Cardiac septum (tissue), 1 donor: ENCODE measurements at regions of chr18 and their contacts with region 1.

Region 1: DNA sequence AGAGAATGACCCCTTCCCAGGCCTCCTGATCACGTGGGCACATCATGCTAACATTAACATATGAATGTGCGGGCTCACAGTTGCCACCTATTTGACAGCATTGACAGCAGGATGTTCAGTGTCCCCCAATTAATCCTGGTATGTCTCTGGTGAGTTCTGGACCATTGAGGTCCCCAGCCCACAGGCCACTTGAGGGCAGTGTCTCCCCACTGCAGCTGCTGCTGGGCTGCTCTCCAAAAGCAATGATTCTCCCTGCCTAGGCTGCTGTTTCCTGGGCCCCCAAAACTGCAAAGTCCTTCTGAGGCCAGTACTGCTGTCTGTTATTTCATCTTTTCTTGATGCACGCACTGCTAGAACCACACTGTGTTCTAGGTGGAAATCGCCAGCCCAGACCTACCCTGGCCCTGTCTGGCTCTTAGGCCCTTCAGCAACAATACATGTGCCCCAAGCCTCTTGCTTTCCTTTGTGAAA is 52.7 kb upstream of the MAPK4 start:
- DNase-seq: no peak

Region 2: DNA sequence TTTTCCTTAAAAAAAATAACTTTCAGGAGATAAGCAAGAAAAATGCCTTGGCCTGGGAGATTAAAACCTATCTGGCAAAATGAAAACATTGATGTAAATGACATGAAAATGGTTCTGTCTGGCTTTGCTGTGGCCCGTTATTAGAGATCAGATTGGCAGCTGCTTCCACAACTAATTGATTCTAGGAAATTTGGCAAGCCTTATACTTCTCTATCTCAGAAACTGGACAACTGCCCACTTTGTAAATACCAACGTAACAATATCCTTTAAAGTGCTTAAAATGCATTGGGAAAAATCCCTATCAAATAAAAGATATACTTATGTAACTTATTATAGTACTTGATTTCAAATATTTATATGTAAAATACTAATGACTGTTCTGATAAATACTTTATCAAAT is 146.5 kb before region 1 on chr18:
- intact Hi-C with region 1: no loop called
- DNase-seq: no peak

Region 3: GRCh38 chr18:50573679-50574078 is 66.5 kb after region 1 on chr18:
- intact Hi-C with region 1: loop called (anchors 10 kb)
- DNase-seq: no peak

Region 4: DNA sequence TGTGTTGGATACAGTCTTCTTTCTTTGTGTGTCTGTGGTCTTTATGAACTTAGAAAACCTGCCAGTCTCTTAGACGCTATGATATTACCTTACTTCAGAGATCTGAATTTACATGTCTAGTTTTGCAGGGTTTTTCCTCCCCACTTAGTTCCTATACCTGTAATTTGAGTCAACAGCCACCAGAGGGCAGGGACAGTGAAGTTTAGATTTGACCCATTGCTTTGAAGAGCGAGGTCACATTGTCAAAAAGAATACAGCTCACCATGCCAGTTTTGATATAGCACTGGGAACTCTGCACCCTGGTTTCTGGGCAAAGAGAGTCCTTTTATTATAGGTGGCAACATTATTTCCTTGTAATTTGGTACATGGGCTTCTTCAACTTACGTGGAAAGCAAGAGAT is 155.0 kb after region 1 on chr18:
- intact Hi-C with region 1: loop called (anchors 5 kb)
- DNase-seq: no peak

Region 5: DNA sequence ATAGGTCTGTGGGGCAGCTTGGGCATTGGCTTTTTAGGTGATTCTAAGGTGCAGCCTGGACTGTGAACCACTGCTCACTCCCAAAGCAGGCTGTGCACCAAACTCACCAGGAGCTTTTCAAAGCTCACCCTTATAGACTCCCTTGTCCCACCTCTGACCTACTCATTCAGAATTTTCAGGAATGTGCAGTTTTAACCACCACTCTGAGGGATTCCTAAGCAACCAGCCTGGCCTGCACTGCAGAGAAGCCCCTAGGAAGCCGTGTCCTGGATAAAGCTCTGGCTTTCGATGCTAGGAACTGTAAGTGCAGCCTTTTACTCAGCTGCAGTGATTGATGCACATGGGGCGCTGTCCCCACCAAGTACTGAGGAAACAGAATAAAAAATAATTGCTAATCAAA is 279.7 kb after region 1 on chr18:
- intact Hi-C with region 1: loop called (anchors 1 kb)
- DNase-seq: no peak

Region 6: GRCh38 chr18:50866765-50867164 is 359.6 kb after region 1 on chr18:
- intact Hi-C with region 1: loop called (anchors 5 kb)
- DNase-seq: no peak